ENCODE measurements at regions of chr12 and their contacts with region 1.

Region 1: DNA sequence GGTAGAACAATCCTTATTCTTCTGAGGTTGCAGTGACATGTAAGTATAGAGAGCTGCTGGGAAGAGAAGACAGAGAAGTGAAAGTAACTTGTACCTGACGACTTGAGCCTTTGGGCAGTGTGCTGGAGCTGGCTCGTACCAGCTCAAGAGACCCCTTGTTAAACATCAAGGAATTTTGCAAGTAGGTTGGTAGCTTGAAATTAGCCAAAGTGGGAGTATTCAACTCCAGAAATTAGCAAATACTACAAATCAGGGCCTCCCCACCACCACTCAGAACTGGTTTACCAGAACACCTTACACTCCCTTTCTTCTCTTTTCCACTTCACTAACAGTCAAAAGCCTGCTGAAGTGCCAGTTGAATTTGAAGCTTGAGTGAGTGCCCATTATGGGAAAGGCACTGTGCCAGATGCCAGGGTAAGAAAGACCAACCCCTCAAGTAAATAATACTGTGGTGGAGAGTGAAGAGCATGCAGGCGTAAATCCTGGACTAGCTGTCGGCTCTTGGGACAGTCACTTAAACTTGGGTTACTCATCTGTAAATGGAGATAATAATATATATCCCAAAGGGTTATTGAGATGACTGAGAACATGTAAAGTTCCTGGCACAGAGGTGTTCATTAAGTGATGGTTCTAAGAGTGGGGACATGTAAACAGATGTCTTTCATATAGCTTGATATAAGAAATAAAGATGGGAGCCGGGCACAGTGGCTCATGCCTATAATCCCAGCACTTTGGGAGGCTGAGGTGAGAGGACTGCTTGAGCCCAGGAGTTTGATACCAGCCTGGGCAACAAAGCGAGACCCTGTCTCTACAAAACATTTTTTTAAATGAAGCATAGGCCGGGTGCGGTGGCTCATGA is 27.0 kb upstream of the EID3 start:
- DNase-seq: no peak
- H3K4me3 ChIP-seq: no peak overlapping the region
- H3K27me3 ChIP-seq: no peaks in the 10 kb centered on the region
- CTCF ChIP-seq: no peak

Region 2: DNA sequence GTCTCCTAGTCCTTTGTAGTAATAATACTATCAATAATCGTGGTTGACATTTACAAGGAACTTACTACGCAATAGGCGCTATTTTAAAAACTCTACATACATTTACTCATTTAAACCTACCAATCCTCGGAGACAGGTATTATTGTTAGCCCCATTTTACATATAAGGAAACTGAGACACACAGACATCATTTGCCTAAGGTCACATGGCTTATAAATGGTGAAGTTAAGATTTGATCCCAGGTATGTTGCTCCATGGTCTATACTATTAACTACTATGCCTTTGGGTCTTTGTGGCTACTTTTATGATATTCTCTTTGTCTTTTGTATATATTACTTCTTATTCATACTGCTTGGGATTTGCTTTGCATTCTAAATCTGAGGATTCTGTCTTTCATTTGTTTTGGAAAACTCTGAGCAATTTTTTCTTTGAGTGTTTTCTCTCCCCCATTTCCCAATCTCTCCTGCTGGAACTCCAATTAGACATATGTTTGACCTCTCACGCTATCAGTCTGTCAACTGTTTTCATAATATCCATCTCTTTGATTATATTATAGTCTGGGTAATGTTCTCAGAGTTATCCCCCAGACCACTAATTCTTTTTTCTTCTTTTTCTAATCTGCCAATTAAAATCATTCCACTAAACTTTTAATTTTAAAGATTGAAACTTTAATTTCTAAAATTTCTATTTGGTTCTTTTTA is 446.3 kb before region 1 on chr12:
- CTCF ChIA-PET with region 1: no interaction called
- POLR2A ChIA-PET with region 1: interaction called, 11 read pairs
- DNase-seq: no peak
- H3K4me3 ChIP-seq: no peak overlapping the region
- H3K27me3 ChIP-seq: no peaks in the 10 kb centered on the region
- CTCF ChIP-seq: no peak

Region 3: GRCh38 chr12:104263580-104264358 is 12.7 kb before region 1 on chr12:
- CTCF ChIA-PET with region 1: interaction called, 3 read pairs
- POLR2A ChIA-PET with region 1: interaction called, 13 read pairs
- DNase-seq: peak; percentile 82
- H3K4me3 ChIP-seq: no peak overlapping the region
- H3K27me3 ChIP-seq: no peaks in the 10 kb centered on the region
- CTCF ChIP-seq: no peak

Region 4: DNA sequence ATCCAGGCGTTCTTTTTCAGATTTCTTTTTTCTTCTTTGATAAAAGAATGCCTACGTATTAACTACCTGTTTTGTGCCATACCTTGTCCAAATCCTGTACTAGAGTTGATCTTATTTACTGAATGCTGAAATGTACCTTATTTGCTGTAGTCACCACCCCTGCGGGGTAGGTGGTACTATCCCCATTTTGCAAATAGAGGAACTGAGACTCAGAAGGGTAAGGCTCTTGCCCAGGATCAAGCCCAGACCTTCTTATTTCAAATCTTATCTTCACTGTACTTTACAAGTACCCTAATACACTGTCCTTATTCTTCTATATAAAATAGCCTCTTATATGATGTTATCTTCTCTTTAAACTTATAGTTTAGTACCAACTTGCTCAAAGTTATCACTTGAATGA is 475.1 kb after region 1 on chr12:
- CTCF ChIA-PET with region 1: no interaction called
- POLR2A ChIA-PET with region 1: no interaction called
- DNase-seq: no peak
- H3K4me3 ChIP-seq: no peak overlapping the region
- H3K27me3 ChIP-seq: no peaks in the 10 kb centered on the region
- CTCF ChIP-seq: no peak

Measured in BJ (cell line).